ENCODE measurements at regions of chr10 and their contacts with region 1.

Region 1: DNA sequence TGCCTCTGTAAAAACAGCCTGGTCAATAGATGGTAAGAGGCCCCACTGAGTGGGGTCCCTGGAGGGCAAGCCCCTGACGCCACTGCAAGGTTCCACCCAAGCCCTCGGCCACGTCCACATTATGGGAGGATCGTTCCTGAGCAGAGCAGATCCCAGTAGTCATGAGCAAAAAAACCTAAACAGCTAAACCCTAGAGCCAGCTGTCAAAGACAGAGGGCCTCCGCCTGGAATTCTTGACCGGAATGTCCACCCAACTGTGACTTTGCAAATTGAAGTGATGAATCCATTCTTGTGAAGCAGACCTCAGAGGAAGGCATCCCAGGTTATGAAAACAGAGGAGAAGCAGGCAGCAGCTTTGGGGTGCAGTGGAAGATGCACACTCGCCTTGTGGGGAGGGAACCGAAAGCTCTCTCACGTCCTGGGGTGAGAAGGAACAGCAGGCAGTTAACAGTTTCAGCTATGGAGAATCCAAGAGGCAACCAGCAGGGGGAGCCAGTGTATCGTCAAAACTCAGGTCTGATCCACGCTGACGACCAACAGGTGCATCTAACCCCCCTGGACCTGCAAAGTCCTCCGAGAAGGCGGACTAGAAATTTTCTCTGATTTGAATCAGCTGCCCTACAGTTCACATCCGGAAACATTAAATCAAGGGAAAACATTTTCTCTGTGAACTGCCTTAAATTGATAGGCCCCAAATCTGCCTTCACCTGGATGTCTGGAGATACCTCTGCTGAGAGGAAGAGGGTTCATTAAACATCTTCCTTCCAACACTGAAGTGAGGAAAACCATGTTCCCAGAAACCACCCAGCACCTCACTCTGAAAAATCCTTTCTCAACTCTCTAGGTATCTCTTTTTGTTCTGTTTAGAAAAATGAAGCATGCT is 139.1 kb upstream of the PFKP start:
- DNase-seq: peak; percentile 66
- ATAC-seq: peak; percentile 82

Region 2: DNA sequence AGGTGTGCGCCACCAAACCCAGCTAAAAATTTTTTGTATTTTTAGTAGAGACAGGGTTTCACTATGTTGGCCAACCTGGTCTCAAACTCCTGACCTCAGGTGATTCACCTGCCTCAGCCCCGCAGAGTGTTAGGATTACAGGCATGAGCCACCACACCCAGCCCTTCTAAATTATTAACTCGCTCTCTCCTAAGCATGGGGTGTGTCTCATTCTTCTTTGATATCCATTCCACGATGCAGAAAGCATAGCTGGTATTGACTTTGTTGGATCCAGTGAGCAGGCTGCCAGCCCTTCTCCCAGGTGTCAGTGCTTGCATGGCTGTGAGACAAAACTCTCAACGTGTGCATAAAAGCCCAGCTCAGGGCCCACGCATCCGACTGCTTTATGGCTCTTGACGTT is 114.9 kb before region 1 on chr10:
- intact Hi-C with region 1: no loop called
- DNase-seq: no peak
- ATAC-seq: no peak

Region 3: DNA sequence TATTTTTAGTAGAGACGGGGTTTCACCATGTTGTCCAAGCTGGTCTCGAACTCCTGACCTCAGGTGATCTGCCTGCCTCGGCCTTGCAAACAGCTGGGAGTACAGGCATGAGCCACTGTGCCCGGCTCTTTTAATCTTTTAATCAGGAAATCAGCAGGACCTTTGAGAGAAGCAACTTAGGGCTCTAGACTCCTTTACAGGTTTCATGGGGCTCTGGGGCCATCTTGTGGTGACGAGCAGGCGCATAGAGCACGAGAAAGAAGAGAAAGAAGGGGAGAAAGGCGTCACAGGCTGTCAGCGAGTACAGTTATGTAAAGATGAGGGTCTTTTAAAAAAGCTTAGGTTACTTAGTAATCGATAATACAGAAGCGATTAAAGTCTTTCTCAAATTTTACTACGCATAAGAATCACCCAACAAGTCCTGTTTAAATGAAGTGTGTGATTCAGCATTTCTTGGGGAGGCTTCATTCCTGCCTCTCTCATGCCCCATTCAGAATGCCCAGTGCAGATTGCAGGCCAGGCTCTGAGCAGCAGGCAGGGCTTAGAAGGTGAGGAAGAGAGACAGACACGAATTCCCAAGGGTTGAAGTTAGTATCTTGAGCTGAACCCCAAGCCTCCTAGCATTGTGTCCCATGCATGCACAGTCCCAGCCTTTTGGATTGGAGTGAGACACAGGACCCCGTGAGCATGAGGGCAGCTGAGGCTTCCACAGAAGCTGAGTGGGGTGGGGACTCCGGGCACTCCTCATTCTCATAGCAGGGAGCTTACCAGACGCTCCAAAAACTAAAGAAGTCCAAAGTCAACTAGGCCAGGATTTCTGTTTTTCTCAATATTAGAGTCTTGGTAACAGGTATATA is 115.5 kb after region 1 on chr10:
- intact Hi-C with region 1: loop called (anchors 5 kb)
- DNase-seq: peak; percentile 66
- ATAC-seq: peak; percentile 74